ENCODE measurements at regions of chr6 and their contacts with region 1.

Region 1: DNA sequence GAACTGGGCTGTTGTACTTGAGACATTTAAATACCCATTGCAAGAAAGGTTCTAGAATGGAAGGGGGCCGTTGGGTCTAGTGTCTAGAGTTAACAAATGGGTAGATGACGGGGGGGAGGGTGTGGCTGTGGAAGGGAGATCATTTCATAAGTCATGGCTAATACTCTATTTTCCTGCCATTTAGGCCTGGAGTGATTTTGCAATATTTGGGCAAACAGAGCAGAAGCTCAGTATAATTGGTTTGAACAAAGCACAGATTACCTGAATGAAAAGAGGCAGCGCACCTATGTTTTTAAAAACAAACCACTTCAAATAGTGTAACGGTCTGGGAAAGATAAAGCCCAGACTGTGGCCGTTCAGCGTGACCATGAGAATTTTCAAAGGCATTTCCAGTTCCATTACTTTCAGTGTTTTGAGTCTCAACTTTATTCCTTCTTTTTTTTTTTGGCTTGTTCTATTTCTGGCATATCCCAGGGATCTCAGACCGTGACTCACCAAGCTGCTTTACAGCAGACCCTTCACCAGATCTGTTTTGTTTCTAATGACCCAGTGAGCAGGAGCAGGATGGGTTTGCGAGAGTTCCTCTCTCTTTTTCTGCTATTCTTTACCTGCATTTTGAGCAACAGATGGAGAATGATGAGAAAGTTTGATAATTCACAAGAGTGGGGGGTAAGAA is 73.7 kb downstream of the LYRM2 start:
- DNase-seq: peak in 1 of 2 experiments; percentile 38
- H3K4me3 ChIP-seq: no peak overlapping the region
- H3K4me3 Mint-ChIP-seq: no peak overlapping the region
- H3K27ac Mint-ChIP-seq: no peak overlapping the region
- H3K4me1 ChIP-seq: peaks cover 18% of the 10 kb centered on the region
- H3K4me1 Mint-ChIP-seq: peaks cover 21% of the 10 kb centered on the region
- H3K27me3 ChIP-seq: no peaks in the 10 kb centered on the region
- H3K27me3 Mint-ChIP-seq: no peaks in the 10 kb centered on the region
- CTCF ChIP-seq: no peak

Region 2: DNA sequence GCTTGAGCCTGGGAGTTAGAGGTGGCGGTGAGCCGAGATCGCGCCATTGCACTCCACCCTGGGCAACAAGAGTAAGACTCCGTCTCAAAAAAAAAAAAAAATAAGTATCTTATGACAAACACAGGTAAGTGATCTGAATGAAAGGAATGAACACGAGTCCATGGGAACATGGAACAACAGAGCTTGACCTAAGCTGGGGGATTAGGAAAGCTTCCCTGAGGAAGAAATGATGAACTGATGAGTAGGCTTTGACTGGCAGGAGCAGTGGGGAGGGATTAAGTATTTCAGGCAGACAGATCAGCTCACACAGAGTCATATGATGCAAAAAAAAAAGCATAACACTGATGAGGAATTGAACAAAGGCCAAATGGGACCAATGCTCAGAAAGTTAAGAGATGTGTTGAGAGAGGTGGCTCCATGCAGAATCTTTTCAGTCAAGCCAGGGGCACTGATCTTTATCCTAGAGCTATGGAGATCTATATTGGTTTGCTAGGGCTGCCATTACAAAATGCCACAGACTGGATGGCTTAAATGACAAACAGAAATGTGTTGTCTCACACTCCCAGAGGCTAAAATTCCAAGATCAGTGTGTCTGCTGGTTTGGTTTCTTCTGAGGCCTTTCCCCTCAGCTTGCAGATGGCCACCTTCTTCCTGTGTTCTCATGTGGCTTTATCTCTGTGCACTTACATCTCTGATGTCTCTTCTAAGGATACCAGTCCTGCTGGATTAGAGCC is 46.4 kb before region 1 on chr6:
- CTCF ChIA-PET with region 1: no interaction called
- POLR2A ChIA-PET with region 1: no interaction called
- intact Hi-C with region 1: no loop called
- DNase-seq: no peak
- H3K4me3 ChIP-seq: no peak overlapping the region
- H3K4me3 Mint-ChIP-seq: no peak overlapping the region
- H3K27ac Mint-ChIP-seq: no peak overlapping the region
- H3K4me1 ChIP-seq: no peaks in the 10 kb centered on the region; the same call in 1 of the 2 replicates
- H3K4me1 Mint-ChIP-seq: no peaks in the 10 kb centered on the region
- H3K27me3 ChIP-seq: no peaks in the 10 kb centered on the region
- H3K27me3 Mint-ChIP-seq: no peaks in the 10 kb centered on the region
- CTCF ChIP-seq: no peak

Region 3: GRCh38 chr6:89574910-89575561 is 10.1 kb after region 1 on chr6:
- CTCF ChIA-PET with region 1: no interaction called
- POLR2A ChIA-PET with region 1: no interaction called
- intact Hi-C with region 1: loop called (anchors 1 kb)
- DNase-seq: peak; percentile 63 to 72
- H3K4me3 ChIP-seq: no peak overlapping the region
- H3K4me3 Mint-ChIP-seq: peak overlapping the region; percentile 61
- H3K27ac Mint-ChIP-seq: peak overlapping the region; percentile 85
- H3K4me1 ChIP-seq: peaks cover 21% of the 10 kb centered on the region
- H3K4me1 Mint-ChIP-seq: peaks cover 15% of the 10 kb centered on the region
- H3K27me3 ChIP-seq: no peaks in the 10 kb centered on the region
- H3K27me3 Mint-ChIP-seq: no peaks in the 10 kb centered on the region
- CTCF ChIP-seq: no peak

Region 4: GRCh38 chr6:89585154-89585553 is 20.3 kb after region 1 on chr6:
- CTCF ChIA-PET with region 1: no interaction called
- POLR2A ChIA-PET with region 1: no interaction called
- intact Hi-C with region 1: no loop called
- DNase-seq: no peak
- H3K4me3 ChIP-seq: no peak overlapping the region
- H3K4me3 Mint-ChIP-seq: no peak overlapping the region
- H3K27ac Mint-ChIP-seq: no peak overlapping the region
- H3K4me1 ChIP-seq: no peaks in the 10 kb centered on the region
- H3K4me1 Mint-ChIP-seq: no peaks in the 10 kb centered on the region
- H3K27me3 ChIP-seq: no peaks in the 10 kb centered on the region
- H3K27me3 Mint-ChIP-seq: no peaks in the 10 kb centered on the region
- CTCF ChIP-seq: no peak

Measured in Caco-2 (cell line).